Activated CD4-positive, alpha-beta memory T cell treated with anti-CD3 and anti-CD28 coated beads for 36 hours (primary cell): ENCODE measurements at regions of chr3 and their contacts with region 1.

Region 1: GRCh38 chr3:150763122-150763841 is at the start of gene SIAH2:
- DNase-seq: peak; percentile 96
- H3K4me3 Mint-ChIP-seq: peak within 1 kb of the TSS; percentile 99
- H3K27ac Mint-ChIP-seq: peak within 1 kb of the TSS; percentile 100
- H3K4me1 Mint-ChIP-seq: peaks cover 50% of the 10 kb centered on the region
- H3K27me3 Mint-ChIP-seq: no peaks in the 10 kb centered on the region
- total RNA-seq, gene SIAH2: 74.0 to 74.9 TPM

Region 2: GRCh38 chr3:149702691-149703441 is 1060.4 kb before region 1 on chr3:
- CTCF ChIA-PET with region 1: no interaction called
- POLR2A ChIA-PET with region 1: no interaction called
- intact Hi-C with region 1: loop called (anchors 10 kb)
- DNase-seq: peak; percentile 28
- H3K4me3 Mint-ChIP-seq: peak overlapping the region; percentile 16
- H3K27ac Mint-ChIP-seq: peak overlapping the region; percentile 81
- H3K4me1 Mint-ChIP-seq: peaks cover 33% of the 10 kb centered on the region
- H3K27me3 Mint-ChIP-seq: no peaks in the 10 kb centered on the region

Region 3: DNA sequence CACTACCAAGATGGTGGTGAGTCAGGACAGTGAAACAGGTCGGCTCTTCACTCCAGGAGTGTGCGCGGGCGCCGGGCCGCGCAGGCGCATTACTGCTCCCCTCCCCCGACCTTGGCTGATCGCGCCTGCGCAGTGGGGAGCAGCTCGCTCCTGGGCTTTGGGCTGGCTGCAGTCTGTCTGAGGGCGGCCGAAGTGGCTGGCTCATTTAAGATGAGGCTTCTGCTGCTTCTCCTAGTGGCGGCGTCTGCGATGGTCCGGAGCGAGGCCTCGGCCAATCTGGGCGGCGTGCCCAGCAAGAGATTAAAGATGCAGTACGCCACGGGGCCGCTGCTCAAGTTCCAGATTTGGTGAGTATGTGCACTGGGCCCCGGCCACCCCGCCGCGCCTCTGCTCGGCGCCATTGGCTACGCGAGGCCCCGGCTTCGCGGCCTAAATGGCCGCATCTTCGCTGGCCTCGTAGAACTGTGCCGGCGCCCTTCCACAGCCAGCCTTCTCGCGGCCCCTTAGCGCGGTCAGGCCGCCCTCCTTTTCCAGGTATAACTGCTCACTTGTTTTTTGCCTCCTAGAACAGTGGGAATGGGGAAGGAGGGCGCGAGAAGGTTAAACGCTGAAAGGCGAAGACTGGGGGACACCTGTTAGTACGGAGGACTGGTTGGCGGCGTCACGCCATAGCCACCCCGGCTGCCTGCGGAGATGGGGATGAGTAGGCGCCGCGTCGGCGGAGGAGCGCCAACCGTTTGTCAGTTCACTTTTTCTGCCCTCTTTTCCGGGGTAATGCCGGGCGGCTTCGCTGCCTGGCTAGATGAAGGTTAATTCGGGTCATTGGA is 159.9 kb before region 1 on chr3 and contains the start of gene SELENOT:
- CTCF ChIA-PET with region 1: interaction called, 8 read pairs
- POLR2A ChIA-PET with region 1: interaction called, 18 read pairs
- intact Hi-C with region 1: loop called (anchors 1 kb)
- DNase-seq: peak; percentile 96
- H3K4me3 Mint-ChIP-seq: peak within 1 kb of the TSS; percentile 96
- H3K27ac Mint-ChIP-seq: peak within 1 kb of the TSS; percentile 97
- H3K4me1 Mint-ChIP-seq: peaks cover 51% of the 10 kb centered on the region
- H3K27me3 Mint-ChIP-seq: no peaks in the 10 kb centered on the region
- total RNA-seq, gene SELENOT: 105 to 111 TPM

Region 4: DNA sequence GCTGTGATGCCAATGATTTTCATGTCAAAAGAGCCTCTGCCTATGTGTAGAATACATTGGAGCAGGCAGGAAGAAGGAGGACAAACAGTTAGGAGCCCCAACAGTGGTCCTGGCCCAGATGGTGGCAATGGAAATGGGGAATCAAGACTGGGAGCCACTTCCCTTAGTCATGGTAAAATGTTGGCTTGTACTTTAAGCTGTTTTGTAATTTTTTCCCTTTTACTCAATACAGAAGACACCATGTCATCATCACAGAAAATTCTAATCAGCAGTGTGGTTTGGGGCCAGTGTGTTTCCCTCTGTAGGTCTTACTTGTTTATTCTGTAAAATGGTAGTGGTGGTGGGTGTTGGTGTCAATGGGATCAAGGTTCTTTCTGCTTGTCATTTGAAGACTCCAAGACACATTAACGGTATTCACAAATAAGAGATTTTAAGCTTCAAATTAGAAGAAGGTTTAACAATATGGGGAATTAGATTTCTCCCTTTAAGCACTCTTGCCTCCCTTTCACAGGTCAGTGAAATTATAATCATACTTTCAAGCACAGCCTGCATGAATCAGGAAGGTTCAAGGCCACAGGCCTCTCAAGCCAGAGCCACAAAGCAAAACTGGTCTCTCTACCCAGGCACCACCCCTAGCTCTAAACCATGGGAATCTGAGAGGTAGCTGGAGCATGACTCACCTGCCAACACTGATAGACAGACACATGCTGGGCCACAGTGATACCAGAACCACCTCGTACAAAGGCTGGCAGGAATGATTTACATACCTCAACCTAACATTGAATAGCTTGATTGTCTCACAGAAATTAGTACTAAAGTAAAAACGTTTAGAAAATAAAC is 25.2 kb before region 1 on chr3:
- CTCF ChIA-PET with region 1: interaction called, 40 read pairs
- POLR2A ChIA-PET with region 1: interaction called, 140 read pairs
- intact Hi-C with region 1: loop called (anchors 1 kb)
- DNase-seq: peak; percentile 79
- H3K4me3 Mint-ChIP-seq: peak overlapping the region; percentile 38
- H3K27ac Mint-ChIP-seq: peak overlapping the region; percentile 99
- H3K4me1 Mint-ChIP-seq: peaks cover 73% of the 10 kb centered on the region
- H3K27me3 Mint-ChIP-seq: no peaks in the 10 kb centered on the region

Region 5: DNA sequence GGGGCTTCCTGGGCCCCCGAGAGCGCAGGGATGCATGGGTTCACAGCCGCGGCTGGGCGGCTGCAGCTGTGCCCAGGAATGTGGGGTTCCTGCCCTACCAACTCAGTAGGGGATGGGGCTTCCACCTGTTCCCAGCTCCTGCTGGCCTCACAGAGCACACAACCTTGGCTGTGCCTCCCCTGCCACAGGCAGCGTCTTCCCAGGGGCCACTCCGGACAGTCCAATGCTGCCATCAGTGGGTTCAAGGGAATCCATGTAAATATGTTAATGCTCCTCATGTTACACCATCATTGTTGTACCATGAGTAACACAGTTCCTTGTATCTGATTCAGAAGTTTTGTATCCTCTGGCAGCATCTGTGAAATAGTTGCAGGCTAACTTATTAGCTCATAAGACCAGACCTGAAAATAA is 11.8 kb after region 1 on chr3:
- CTCF ChIA-PET with region 1: interaction called, 8 read pairs
- POLR2A ChIA-PET with region 1: interaction called, 12 read pairs
- intact Hi-C with region 1: no loop called
- DNase-seq: no peak
- H3K4me3 Mint-ChIP-seq: no peak overlapping the region
- H3K27ac Mint-ChIP-seq: no peak overlapping the region
- H3K4me1 Mint-ChIP-seq: no peaks in the 10 kb centered on the region
- H3K27me3 Mint-ChIP-seq: peaks cover 4% of the 10 kb centered on the region

Region 6: DNA sequence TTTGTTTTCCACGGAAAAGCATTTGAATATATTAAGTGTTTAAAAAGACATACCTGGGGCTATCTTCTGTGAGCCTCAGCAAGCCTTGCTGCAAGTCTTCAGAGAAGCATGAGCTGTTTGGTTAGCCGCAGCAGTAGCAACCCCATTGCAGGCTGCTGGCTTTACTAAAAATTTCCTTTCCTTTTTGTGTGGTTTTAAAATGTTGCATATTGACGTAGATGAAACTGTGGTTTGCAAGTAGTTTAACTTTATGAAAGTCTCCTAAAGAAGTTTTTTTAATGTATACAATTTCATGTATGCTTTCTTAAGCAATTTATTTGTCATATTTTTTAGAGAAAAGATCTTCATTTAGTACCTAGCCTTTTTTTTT is 439.8 kb after region 1 on chr3 and contains the start of gene GPR171:
- CTCF ChIA-PET with region 1: interaction called, 4 read pairs
- POLR2A ChIA-PET with region 1: interaction called, 111 read pairs
- intact Hi-C with region 1: loop called (anchors 1 kb)
- DNase-seq: peak; percentile 84
- H3K4me3 Mint-ChIP-seq: peak within 1 kb of the TSS; percentile 86
- H3K27ac Mint-ChIP-seq: peak within 1 kb of the TSS; percentile 99
- H3K4me1 Mint-ChIP-seq: peaks cover 65% of the 10 kb centered on the region
- H3K27me3 Mint-ChIP-seq: no peaks in the 10 kb centered on the region
- total RNA-seq, gene GPR171: 70.7 to 74.0 TPM

Region 7: DNA sequence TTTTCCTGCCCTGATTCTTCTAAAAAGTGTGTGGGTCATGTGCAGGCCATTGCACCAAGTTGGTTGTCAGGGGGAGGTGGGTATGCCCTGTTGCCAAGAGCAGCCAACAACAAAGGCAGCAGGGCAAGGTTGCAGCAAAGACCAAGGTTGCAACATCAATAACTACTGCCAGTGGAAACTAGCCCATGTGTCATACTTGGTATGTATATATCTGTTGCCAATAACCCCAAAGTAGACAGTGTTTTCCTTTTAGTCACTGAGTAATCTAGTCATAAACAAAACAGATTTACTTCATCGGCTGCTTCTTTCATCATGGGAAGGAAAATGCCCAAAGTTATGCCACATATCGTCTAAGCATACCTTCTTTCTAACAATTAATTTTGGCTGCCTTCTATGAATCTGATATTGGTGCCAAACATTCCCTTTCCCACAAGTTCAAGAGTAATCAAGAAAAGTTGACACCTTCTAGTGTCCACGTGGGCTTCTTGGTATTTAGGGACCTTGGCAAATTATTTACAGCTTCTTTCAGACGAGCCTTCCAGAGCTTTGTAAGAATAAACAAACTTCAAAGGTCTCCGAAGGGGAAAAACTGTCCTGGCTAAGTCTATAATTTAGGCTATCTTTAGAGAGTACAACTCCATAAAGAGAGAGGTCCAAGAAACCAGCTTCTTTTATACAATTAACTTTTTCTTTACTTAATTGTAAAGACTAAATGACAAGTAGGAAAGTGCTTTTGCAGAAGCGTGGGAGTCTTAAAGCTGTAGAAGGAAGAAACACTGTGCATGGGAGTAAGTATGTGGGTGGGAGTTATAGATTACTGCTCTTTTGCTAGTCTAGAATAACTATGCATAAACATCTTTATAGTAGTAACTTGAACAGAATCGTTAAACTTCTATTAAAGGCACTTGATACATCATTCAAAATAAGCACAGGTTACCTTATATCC is 1495.4 kb after region 1 on chr3:
- CTCF ChIA-PET with region 1: no interaction called
- POLR2A ChIA-PET with region 1: no interaction called
- intact Hi-C with region 1: loop called (anchors 5 kb)
- DNase-seq: peak; percentile 86
- H3K4me3 Mint-ChIP-seq: peak overlapping the region; percentile 70
- H3K27ac Mint-ChIP-seq: peak overlapping the region; percentile 95
- H3K4me1 Mint-ChIP-seq: peaks cover 83% of the 10 kb centered on the region
- H3K27me3 Mint-ChIP-seq: no peaks in the 10 kb centered on the region